ENCODE measurements at regions of chr2 and their contacts with region 1.

Region 1: GRCh38 chr2:148509288-148509902 is 135.2 kb upstream of the EPC2 start:
- DNase-seq: peak; percentile 90
- H3K4me3 Mint-ChIP-seq: peak overlapping the region; percentile 68
- H3K27ac Mint-ChIP-seq: peak overlapping the region; percentile 68
- H3K4me1 Mint-ChIP-seq: no peaks in the 10 kb centered on the region
- H3K27me3 Mint-ChIP-seq: no peaks in the 10 kb centered on the region
- CTCF ChIP-seq: peak; percentile 79

Region 2: GRCh38 chr2:147937744-147938349 is 571.5 kb before region 1 on chr2:
- CTCF ChIA-PET with region 1: interaction called, 3 read pairs
- intact Hi-C with region 1: loop called (anchors 1 kb)
- DNase-seq: no peak
- H3K4me3 Mint-ChIP-seq: no peak overlapping the region
- H3K27ac Mint-ChIP-seq: no peak overlapping the region
- H3K4me1 Mint-ChIP-seq: no peaks in the 10 kb centered on the region
- H3K27me3 Mint-ChIP-seq: no peaks in the 10 kb centered on the region
- CTCF ChIP-seq: peak; percentile 80

Region 3: DNA sequence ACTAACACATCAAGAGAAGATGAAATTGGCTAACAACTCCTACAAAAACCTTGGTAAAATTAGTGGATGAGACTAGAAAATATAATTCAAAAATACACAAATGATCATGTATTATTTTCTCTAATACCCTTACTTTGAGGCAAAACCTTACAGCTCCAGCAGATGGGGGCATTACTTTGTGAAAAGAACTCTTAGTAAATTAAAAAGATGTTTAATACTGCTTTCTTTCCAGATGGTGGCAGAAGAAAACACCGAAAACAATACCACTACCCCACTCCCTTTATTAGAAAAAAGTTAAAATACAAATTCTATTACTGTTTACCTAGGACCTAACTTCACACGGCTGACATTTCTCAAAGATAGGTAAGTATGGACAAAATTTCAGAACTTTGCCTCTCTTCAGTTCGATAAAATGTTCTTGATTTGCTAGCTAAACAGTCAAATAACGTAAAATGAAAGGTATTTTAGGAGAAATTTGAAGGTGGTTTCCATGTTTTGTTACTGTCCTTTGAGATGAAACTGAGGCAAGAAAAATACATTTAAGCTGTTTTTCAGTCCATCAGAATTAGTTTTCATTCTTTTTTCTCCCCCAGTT is 519.5 kb before region 1 on chr2:
- CTCF ChIA-PET with region 1: interaction called, 12 read pairs
- intact Hi-C with region 1: loop called (anchors 1 kb)
- DNase-seq: peak; percentile 13
- H3K4me3 Mint-ChIP-seq: no peak overlapping the region
- H3K27ac Mint-ChIP-seq: no peak overlapping the region
- H3K4me1 Mint-ChIP-seq: peaks cover 6% of the 10 kb centered on the region
- H3K27me3 Mint-ChIP-seq: no peaks in the 10 kb centered on the region
- CTCF ChIP-seq: peak; percentile 11

Region 4: DNA sequence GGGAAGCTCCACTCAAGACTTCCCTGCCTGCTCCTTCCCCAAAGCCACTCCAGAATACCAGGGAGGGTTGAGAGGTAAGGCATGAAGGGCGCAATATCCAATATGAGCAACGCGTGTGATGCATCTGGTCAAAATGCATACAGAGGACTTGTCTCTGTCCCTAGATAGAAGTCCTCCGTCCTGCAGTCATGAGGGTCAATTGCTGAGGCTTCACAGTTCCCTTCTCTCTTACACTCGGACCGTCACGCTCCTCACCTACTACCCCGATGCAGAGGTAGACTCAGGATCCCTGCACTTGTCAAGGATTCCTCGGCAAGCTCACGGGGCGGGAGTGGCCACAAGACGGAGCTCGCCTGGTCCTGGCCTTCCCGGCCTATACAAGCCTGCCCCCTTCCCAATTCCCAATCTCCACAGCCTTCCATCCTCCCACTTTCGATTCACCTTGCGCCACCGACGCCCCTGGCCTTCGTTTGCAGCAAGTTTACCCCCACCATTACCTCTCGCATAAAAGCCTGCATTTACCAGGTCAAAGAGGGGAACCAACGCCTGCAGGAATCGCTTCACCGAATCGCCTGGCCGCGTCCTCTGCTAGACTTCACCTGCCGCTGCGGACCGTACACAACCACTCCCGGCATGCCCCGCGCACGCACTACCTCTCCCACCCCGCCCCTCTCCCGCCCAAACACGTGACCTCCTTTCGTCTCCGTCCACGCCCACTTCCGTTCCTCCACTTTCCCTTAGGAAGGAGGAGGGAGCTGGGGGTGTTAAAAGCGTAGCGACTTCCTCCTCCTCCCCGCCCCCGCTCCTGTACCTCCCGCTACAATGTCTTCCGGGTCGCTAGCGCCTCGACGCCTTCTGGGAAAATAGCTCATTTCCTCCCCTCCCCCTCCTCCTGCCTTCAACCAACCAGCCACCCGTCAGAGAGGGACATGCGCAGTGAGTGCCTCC is 489.0 kb before region 1 on chr2 and contains the start of gene ORC4:
- CTCF ChIA-PET with region 1: interaction called, 24 read pairs
- intact Hi-C with region 1: no loop called
- DNase-seq: peak; percentile 97
- H3K4me3 Mint-ChIP-seq: peak within 1 kb of the TSS; percentile 98
- H3K27ac Mint-ChIP-seq: peak within 1 kb of the TSS; percentile 90
- H3K4me1 Mint-ChIP-seq: peaks cover 34% of the 10 kb centered on the region
- H3K27me3 Mint-ChIP-seq: no peaks in the 10 kb centered on the region
- CTCF ChIP-seq: no peak
- total RNA-seq, gene ORC4: 59.2 and 66.2 TPM in 2 replicates

Region 5: DNA sequence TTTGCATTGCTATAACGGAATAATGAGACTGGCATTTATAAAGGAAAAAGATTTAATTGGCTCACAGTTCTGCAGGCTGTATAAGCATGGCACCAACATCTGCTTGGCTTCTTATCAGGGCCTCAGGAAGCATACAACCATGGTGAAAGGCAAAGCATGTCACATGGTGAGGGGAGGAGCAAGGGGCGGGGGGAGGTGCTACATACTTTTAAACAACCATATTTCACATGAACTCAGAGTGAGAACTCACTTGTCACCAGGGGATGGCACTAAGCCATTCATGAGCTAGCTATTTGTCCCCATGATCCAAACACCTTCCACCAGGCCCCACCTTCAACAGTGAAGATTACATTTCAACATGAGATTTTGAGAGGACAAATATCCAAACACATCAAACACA is 299.8 kb before region 1 on chr2:
- CTCF ChIA-PET with region 1: interaction called, 5 read pairs
- intact Hi-C with region 1: loop called (anchors 5 kb)
- DNase-seq: peak; percentile 5
- H3K4me3 Mint-ChIP-seq: no peak overlapping the region
- H3K27ac Mint-ChIP-seq: no peak overlapping the region
- H3K4me1 Mint-ChIP-seq: no peaks in the 10 kb centered on the region
- H3K27me3 Mint-ChIP-seq: no peaks in the 10 kb centered on the region
- CTCF ChIP-seq: no peak

Region 6: GRCh38 chr2:148493822-148494563 is 15.4 kb before region 1 on chr2:
- CTCF ChIA-PET with region 1: interaction called, 12 read pairs
- intact Hi-C with region 1: no loop called
- DNase-seq: no peak
- H3K4me3 Mint-ChIP-seq: no peak overlapping the region
- H3K27ac Mint-ChIP-seq: no peak overlapping the region
- H3K4me1 Mint-ChIP-seq: peaks cover 11% of the 10 kb centered on the region
- H3K27me3 Mint-ChIP-seq: no peaks in the 10 kb centered on the region
- CTCF ChIP-seq: no peak

Region 7: DNA sequence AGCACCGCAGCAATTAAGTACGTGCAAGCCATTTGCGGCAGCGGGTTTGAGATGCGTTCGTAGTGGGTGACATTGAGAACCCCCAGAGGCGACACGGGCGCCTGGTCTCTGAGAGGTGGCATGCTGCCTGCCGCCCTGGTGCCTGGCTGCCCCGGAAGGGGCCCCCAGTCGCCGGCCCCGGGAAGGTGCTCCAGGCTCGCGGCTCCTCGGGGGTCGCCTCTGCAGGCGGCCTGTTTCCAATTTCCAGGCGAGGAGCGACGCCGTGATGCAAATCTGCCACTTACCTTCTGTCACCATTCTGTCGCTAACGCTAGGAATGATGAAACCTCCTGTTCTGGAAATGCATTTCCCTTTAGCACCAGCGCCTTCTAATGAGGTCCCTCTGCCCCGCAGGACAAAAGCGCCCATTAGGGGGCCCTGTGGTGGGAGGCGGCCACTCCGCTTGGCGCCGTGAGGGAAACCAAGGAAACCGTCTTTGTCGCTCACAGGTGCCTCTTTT is 378.7 kb after region 1 on chr2:
- CTCF ChIA-PET with region 1: no interaction called
- intact Hi-C with region 1: no loop called
- DNase-seq: peak; percentile 7
- H3K4me3 Mint-ChIP-seq: peak overlapping the region; percentile 68
- H3K27ac Mint-ChIP-seq: no peak overlapping the region
- H3K4me1 Mint-ChIP-seq: no peaks in the 10 kb centered on the region
- H3K27me3 Mint-ChIP-seq: peaks cover 69% of the 10 kb centered on the region
- CTCF ChIP-seq: no peak